Uterus (tissue), 4 donors: ENCODE measurements at regions of chr4 and their contacts with region 1.

Region 1: DNA sequence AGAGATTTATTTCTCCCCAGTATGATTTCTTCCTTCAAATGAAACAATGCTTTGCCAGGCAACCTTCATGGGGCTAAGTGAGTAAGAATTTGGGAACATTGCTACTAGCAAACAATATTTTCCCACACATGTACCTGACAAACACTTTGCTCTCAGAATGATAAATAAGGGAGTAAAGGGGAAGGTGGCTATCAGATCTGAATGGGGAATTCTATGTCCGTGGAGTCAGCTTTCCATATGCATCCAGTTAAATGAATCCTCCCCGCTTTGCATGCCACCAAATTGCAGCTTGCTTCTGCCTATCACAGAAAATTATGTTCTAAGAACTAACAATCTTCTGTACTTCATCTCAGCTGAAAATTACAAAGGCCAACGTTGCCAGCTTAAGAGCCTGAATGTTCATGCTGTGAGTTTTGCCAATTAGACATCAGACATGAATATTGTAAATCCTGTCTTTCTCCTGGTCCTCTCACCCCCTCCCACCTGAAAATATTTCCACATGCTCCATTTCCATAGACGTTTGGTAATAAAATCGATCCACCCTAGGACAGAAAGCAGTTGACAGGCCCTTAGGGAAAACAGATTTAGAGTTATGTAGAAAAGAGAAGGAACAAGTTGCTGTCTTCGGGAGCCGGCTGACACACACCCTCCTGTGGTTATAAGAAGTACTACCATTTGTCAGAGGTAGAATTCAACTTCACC is 6.3 kb downstream of the MEPE start:
- DNase-seq: peak in 1 of 2 donors; percentile 33
- H3K4me3 ChIP-seq: no peak overlapping the region
- H3K27ac ChIP-seq: no peak overlapping the region
- H3K4me1 ChIP-seq: peaks cover 0 to 6% of the 10 kb centered on the region in 2 donors
- H3K27me3 ChIP-seq: no peaks in the 10 kb centered on the region
- CTCF ChIP-seq: peak; percentile 73 to 83 (median 76)
- POLR2A ChIP-seq: no peak

Region 2: DNA sequence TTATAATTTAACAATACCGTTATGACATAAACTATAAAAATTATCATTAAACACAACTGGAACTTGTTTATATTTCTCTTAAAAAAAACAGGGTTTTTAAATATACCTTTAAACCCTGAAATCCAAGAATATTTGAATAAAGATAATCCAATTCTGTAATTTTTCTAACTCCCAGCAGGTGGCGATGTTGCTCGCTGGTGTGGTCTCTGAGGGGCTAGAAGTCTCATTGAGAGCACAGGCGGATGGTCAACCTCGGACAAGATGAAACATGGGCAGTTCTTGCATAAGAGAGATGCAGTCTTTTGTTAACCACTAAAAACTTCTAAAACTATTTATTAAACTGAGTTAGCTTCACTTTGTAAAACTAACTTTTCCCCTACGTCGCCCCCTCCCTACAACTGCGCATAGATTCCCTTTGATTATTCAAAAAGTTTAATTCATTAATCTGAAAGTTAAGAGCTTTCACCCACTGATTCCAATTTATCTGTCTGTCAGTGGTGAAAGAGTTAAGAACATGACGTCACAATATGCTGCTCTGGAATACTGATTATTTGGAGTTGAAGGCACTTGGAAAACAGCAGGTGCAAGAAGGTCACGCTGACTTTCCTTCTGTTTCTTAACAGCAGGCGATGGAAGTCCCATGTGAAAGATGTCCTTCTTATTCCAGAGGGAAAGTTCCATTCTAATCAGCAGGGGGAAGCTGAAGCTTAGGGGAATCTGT is 159.4 kb before region 1 on chr4:
- intact Hi-C with region 1: loop called (anchors 5 kb)
- DNase-seq: peak; percentile 66 to 73
- H3K4me3 ChIP-seq: no peak overlapping the region
- H3K27ac ChIP-seq: peak overlapping the region; percentile 38 to 55
- H3K4me1 ChIP-seq: no peaks in the 10 kb centered on the region
- H3K27me3 ChIP-seq: no peaks in the 10 kb centered on the region
- CTCF ChIP-seq: peak; percentile 63 to 85 (median 77)
- POLR2A ChIP-seq: no peak

Region 3: GRCh38 chr4:87989765-87990164 is 150.7 kb after region 1 on chr4:
- intact Hi-C with region 1: no loop called
- DNase-seq: no peak
- H3K4me3 ChIP-seq: no peak overlapping the region
- H3K27ac ChIP-seq: no peak overlapping the region
- H3K4me1 ChIP-seq: no peaks in the 10 kb centered on the region
- H3K27me3 ChIP-seq: no peaks in the 10 kb centered on the region
- CTCF ChIP-seq: no peak
- POLR2A ChIP-seq: no peak